Endothelial cell of umbilical vein (primary cell): ENCODE measurements at regions of chr11 and their contacts with region 1.

Region 1: DNA sequence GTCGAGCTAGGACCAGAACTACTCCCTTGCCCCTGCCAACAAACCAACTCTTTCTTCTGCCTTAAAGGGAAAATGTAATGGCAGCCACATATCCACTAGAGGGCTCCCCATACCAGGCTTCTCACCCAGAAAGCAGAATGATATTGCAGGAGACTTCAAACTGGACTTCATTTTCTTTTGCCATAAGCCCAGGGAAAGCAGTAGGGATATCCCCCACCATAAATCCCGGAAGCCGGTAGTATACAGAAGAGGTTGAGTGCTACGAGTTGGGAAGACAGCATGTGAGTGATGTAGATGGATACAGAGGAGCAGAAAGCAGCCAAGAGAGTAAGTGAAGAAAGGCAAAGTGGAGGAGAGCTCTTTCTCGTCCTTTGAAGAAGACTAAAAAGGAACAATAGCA is 12.1 kb downstream of the PLAAT5 start:
- DNase-seq: peak; percentile 79
- H3K4me3 ChIP-seq: no peak overlapping the region
- H3K27ac ChIP-seq: no peak overlapping the region
- H3K4me1 ChIP-seq: no peaks in the 10 kb centered on the region
- H3K27me3 ChIP-seq: peaks cover 2 to 20% of the 10 kb centered on the region in 2 experiments
- CTCF ChIP-seq: peak; percentile 80 to 84
- POLR2A ChIP-seq: no peak

Region 2: GRCh38 chr11:63042596-63042995 is 436.3 kb before region 1 on chr11:
- CTCF ChIA-PET with region 1: no interaction called
- POLR2A ChIA-PET with region 1: no interaction called
- dilution Hi-C with region 1: no loop called
- intact Hi-C with region 1: loop called (anchors 5 kb)
- DNase-seq: no peak
- H3K4me3 ChIP-seq: no peak overlapping the region
- H3K27ac ChIP-seq: no peak overlapping the region
- H3K4me1 ChIP-seq: no peaks in the 10 kb centered on the region
- H3K27me3 ChIP-seq: no peaks in the 10 kb centered on the region
- CTCF ChIP-seq: no peak
- POLR2A ChIP-seq: no peak

Region 3: DNA sequence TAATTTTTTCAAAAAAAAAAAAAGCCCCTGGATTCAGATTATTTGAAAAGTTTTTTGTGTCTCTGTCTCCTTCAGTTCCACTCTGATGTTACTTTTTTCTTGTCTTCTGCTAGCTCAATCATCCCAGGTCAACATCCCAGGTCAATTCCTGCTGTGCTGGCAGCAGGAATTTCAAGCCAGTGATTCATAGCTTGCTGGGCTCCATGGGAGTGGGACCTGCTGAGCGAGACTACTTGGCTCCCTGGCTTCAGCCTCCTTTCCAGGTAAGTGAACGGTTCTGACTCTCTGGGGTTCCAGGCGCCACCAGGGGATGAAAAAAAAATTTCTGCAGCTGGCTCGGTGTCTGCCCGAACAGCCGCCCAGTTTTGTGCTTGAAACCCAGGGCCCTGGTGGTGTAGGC is 19.3 kb before region 1 on chr11:
- CTCF ChIA-PET with region 1: no interaction called
- POLR2A ChIA-PET with region 1: no interaction called
- dilution Hi-C with region 1: no loop called
- intact Hi-C with region 1: no loop called
- DNase-seq: no peak
- H3K4me3 ChIP-seq: no peak overlapping the region
- H3K27ac ChIP-seq: no peak overlapping the region
- H3K4me1 ChIP-seq: no peaks in the 10 kb centered on the region
- H3K27me3 ChIP-seq: peaks cover 3 to 12% of the 10 kb centered on the region in 2 experiments
- CTCF ChIP-seq: no peak
- POLR2A ChIP-seq: no peak

Region 4: DNA sequence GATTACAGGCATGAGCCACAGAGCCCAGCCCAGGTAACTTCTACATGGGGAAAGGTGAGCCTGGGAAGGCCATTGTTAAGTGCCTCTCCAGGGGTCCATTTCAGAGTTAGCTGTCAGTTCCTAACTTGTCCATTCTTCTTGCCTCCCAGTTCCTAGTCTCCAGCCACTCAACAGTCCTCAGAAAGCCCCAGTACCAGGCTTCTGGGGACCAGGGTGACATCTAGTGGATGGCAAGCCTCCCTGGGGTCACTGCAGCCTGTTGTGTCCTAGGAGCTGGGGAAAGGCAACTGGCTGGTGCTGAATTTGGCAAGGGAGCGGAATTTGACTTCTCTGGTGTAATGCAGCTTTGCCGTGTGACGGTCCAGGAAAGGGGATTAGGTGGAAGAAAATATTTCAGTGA is 29.1 kb after region 1 on chr11:
- CTCF ChIA-PET with region 1: interaction called, 18 read pairs
- POLR2A ChIA-PET with region 1: no interaction called
- dilution Hi-C with region 1: no loop called
- intact Hi-C with region 1: no loop called
- DNase-seq: no peak
- H3K4me3 ChIP-seq: no peak overlapping the region
- H3K27ac ChIP-seq: no peak overlapping the region
- H3K4me1 ChIP-seq: no peaks in the 10 kb centered on the region
- H3K27me3 ChIP-seq: peaks cover 0 to 11% of the 10 kb centered on the region in 2 experiments
- CTCF ChIP-seq: peak in 1 of 2 donors; percentile 18
- POLR2A ChIP-seq: no peak

Region 5: GRCh38 chr11:63621931-63622782 is 143.3 kb after region 1 on chr11:
- CTCF ChIA-PET with region 1: interaction called, 24 read pairs
- POLR2A ChIA-PET with region 1: no interaction called
- dilution Hi-C with region 1: no loop called
- intact Hi-C with region 1: no loop called
- DNase-seq: no peak
- H3K4me3 ChIP-seq: no peak overlapping the region
- H3K27ac ChIP-seq: no peak overlapping the region
- H3K4me1 ChIP-seq: no peaks in the 10 kb centered on the region
- H3K27me3 ChIP-seq: no peaks in the 10 kb centered on the region
- CTCF ChIP-seq: no peak
- POLR2A ChIP-seq: no peak

Region 6: GRCh38 chr11:63635762-63636465 is 157.0 kb after region 1 on chr11:
- CTCF ChIA-PET with region 1: interaction called, 201 read pairs
- POLR2A ChIA-PET with region 1: no interaction called
- dilution Hi-C with region 1: no loop called
- intact Hi-C with region 1: loop called (anchors 1 kb)
- DNase-seq: peak; percentile 68
- H3K4me3 ChIP-seq: no peak overlapping the region
- H3K27ac ChIP-seq: no peak overlapping the region
- H3K4me1 ChIP-seq: no peaks in the 10 kb centered on the region
- H3K27me3 ChIP-seq: no peaks in the 10 kb centered on the region
- CTCF ChIP-seq: peak; percentile 66
- POLR2A ChIP-seq: no peak